ENCODE measurements at regions of chr3 and their contacts with region 1.

Region 1: DNA sequence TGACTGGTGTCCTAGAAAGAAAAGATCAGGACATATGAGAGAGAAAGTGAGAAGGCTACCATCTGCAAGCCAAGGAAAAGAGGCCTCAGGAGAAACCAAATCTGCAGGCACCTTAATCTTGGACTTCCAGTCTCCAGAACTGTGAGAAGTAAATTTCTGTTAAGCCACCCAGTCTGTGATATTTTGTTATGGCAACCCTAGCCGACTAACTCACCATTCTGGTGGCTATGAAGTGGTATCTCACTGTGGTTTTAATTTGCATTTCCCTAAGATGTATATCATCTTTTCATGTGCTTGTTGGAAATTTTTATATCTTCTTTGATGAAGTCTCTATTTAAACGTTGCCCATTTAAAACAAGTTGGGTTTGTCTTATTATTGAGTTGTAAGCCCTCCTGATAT is 40.6 kb downstream of the ILDR1 start:
- DNase-seq: no peak
- H3K4me3 ChIP-seq: no peak overlapping the region
- H3K4me3 Mint-ChIP-seq: no peak overlapping the region
- H3K27ac Mint-ChIP-seq: no peak overlapping the region
- H3K4me1 ChIP-seq: no peaks in the 10 kb centered on the region
- H3K4me1 Mint-ChIP-seq: no peaks in the 10 kb centered on the region
- H3K27me3 ChIP-seq: no peaks in the 10 kb centered on the region
- H3K27me3 Mint-ChIP-seq: no peaks in the 10 kb centered on the region
- CTCF ChIP-seq: no peak

Region 2: DNA sequence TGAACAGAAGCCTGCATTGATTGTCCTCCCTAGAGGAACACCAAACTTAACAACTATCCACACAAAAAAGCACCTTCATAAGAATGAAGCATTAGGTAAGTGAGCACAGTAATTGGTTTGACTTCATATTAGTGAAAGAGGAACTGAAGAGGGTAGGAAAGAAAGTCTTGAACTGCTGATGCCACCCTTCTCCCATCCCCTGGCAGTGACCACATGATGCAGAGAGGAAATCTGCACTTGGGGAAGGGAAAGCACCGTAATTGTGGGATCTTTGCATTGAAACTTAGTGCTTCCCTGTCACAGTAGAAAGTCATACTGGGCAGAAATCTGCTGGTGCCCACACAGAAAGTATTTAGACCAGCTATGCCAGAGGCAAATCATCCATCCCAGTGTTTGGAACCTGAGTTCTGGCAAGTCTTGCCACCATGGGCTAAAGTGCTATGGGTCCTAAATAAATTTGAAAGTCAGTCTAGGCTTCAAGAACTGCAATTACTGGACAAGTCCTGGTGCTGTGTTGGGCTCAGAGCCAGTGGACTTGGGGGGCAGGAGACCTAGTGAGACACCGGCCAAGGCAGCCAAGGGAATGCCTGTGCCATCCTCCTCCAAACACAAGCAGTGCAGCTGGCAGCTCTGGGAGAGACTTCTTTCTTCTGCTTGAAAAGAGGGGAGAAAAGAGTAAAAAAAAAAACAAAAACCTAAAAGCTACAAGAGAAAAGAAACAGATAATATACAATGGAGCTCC is 23.6 kb before region 1 on chr3:
- CTCF ChIA-PET with region 1: no interaction called
- POLR2A ChIA-PET with region 1: no interaction called
- intact Hi-C with region 1: loop called (anchors 1 kb)
- DNase-seq: no peak
- H3K4me3 ChIP-seq: no peak overlapping the region
- H3K4me3 Mint-ChIP-seq: no peak overlapping the region
- H3K27ac Mint-ChIP-seq: no peak overlapping the region
- H3K4me1 ChIP-seq: no peaks in the 10 kb centered on the region
- H3K4me1 Mint-ChIP-seq: no peaks in the 10 kb centered on the region
- H3K27me3 ChIP-seq: no peaks in the 10 kb centered on the region
- H3K27me3 Mint-ChIP-seq: no peaks in the 10 kb centered on the region
- CTCF ChIP-seq: no peak